HepG2 (cell line): ENCODE measurements at regions of chr12 and their contacts with region 1.

Region 1: GRCh38 chr12:103197725-103198388 is 240.4 kb downstream of the ASCL1 start:
- DNase-seq: no peak
- ATAC-seq: no peak
- H3K4me3 ChIP-seq: no peak overlapping the region
- H3K27ac ChIP-seq: no peak overlapping the region
- H3K4me1 ChIP-seq: no peaks in the 10 kb centered on the region
- H3K27me3 ChIP-seq: no peaks in the 10 kb centered on the region
- CTCF ChIP-seq: no peak
- EP300 ChIP-seq: no peak
- POLR2A ChIP-seq: no peak
- RAD21 ChIP-seq: no peak

Region 2: GRCh38 chr12:102197789-102198188 is 1000.1 kb before region 1 on chr12 and contains the start of gene PMCH:
- CTCF ChIA-PET with region 1: no interaction called
- POLR2A ChIA-PET with region 1: no interaction called
- in situ Hi-C with region 1: no loop called
- intact Hi-C with region 1: loop called (anchors 5 kb)
- DNase-seq: no peak
- ATAC-seq: no peak
- H3K4me3 ChIP-seq: no peak within 1 kb of the TSS
- H3K27ac ChIP-seq: no peak within 1 kb of the TSS
- H3K4me1 ChIP-seq: no peaks in the 10 kb centered on the region
- H3K27me3 ChIP-seq: no peaks in the 10 kb centered on the region
- CTCF ChIP-seq: no peak
- EP300 ChIP-seq: no peak
- POLR2A ChIP-seq: no peak
- RAD21 ChIP-seq: no peak
- total RNA-seq, gene PMCH: not detected in 2 replicates

Region 3: GRCh38 chr12:103353913-103354312 is 156.1 kb after region 1 on chr12:
- CTCF ChIA-PET with region 1: no interaction called
- POLR2A ChIA-PET with region 1: no interaction called
- in situ Hi-C with region 1: no loop called
- intact Hi-C with region 1: no loop called
- DNase-seq: no peak
- ATAC-seq: no peak
- H3K4me3 ChIP-seq: no peak overlapping the region
- H3K27ac ChIP-seq: no peak overlapping the region
- H3K4me1 ChIP-seq: no peaks in the 10 kb centered on the region
- H3K27me3 ChIP-seq: no peaks in the 10 kb centered on the region
- CTCF ChIP-seq: no peak
- EP300 ChIP-seq: no peak
- POLR2A ChIP-seq: no peak
- RAD21 ChIP-seq: no peak